BJ (cell line): ENCODE measurements at regions of chr22 and their contacts with region 1.

Region 1: GRCh38 chr22:19730655-19731360 is 7.5 kb downstream of the GP1BB start:
- DNase-seq: peak; percentile 3
- H3K4me3 ChIP-seq: peak overlapping the region; percentile 52
- H3K27me3 ChIP-seq: no peaks in the 10 kb centered on the region
- CTCF ChIP-seq: peak; percentile 96

Region 2: GRCh38 chr22:19495562-19496323 is 235.1 kb before region 1 on chr22:
- CTCF ChIA-PET with region 1: no interaction called
- POLR2A ChIA-PET with region 1: no interaction called
- DNase-seq: no peak
- H3K4me3 ChIP-seq: no peak overlapping the region
- H3K27me3 ChIP-seq: no peaks in the 10 kb centered on the region
- CTCF ChIP-seq: peak; percentile 15; the same call in 1 of the 2 replicates

Region 3: GRCh38 chr22:19745155-19746101 is 14.6 kb after region 1 on chr22:
- CTCF ChIA-PET with region 1: interaction called, 49 read pairs
- POLR2A ChIA-PET with region 1: no interaction called
- DNase-seq: no peak
- H3K4me3 ChIP-seq: no peak overlapping the region
- H3K27me3 ChIP-seq: peaks cover 4% of the 10 kb centered on the region
- CTCF ChIP-seq: no peak

Region 4: DNA sequence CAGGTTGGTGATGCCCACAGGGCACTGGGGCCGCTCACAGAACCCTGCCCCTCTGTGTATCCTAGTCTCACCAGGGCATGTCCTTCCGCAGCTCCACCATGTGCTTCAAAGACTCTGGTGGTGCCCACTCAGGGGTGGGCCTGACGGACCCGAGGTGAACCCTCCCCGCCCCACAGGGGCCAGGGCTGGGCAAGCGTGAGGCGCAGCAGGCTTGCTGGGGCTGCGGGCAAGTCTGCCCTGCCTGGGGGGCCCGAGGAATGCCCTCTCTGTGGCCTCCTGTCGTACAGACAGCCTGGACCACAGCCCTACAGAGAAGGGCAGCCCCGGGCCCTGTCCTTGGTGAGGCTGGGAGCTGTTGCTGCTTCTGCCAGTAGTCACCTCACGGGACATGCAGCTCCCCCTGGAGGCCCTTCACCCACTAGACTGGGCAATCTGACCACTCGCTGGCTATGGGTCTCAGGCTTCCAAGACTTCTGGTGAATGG is 70.0 kb after region 1 on chr22:
- CTCF ChIA-PET with region 1: interaction called, 12 read pairs
- POLR2A ChIA-PET with region 1: no interaction called
- DNase-seq: no peak
- H3K4me3 ChIP-seq: no peak overlapping the region
- H3K27me3 ChIP-seq: no peaks in the 10 kb centered on the region
- CTCF ChIP-seq: peak; percentile 60

Region 5: GRCh38 chr22:19874307-19875060 is 143.7 kb after region 1 on chr22:
- CTCF ChIA-PET with region 1: interaction called, 13 read pairs
- POLR2A ChIA-PET with region 1: no interaction called
- DNase-seq: no peak
- H3K4me3 ChIP-seq: no peak overlapping the region
- H3K27me3 ChIP-seq: no peaks in the 10 kb centered on the region
- CTCF ChIP-seq: no peak

Region 6: GRCh38 chr22:19903031-19903430 is 172.2 kb after region 1 on chr22:
- CTCF ChIA-PET with region 1: interaction called, 76 read pairs
- POLR2A ChIA-PET with region 1: no interaction called
- DNase-seq: no peak
- H3K4me3 ChIP-seq: no peak overlapping the region
- H3K27me3 ChIP-seq: no peaks in the 10 kb centered on the region
- CTCF ChIP-seq: no peak

Region 7: DNA sequence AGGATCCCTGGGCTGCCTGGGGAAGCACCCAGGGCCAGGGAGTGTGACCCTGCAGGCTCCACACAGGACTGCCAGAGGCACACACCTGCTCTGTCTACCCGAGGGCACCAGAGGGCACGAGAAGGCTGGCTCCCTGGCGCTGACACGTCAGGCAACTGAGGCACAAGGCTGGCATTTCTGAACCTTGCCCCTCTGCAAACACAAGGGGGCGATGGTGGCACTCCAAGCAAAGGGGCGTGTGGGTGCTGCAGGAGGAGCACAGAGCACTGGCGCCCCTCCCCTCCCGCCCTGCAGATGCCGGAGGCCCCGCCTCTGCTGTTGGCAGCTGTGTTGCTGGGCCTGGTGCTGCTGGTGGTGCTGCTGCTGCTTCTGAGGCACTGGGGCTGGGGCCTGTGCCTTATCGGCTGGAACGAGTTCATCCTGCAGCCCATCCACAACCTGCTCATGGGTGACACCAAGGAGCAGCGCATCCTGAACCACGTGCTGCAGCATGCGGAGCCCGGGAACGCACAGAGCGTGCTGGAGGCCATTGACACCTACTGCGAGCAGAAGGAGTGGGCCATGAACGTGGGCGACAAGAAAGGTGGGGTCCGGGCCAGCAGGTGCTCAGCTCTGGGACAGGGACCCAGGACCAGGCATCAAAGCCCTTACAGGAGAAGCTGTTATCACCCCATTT is 231.6 kb after region 1 on chr22:
- CTCF ChIA-PET with region 1: interaction called, 5 read pairs
- POLR2A ChIA-PET with region 1: interaction called, 13 read pairs
- DNase-seq: no peak
- H3K4me3 ChIP-seq: no peak overlapping the region
- H3K27me3 ChIP-seq: no peaks in the 10 kb centered on the region
- CTCF ChIP-seq: peak; percentile 78

Region 8: DNA sequence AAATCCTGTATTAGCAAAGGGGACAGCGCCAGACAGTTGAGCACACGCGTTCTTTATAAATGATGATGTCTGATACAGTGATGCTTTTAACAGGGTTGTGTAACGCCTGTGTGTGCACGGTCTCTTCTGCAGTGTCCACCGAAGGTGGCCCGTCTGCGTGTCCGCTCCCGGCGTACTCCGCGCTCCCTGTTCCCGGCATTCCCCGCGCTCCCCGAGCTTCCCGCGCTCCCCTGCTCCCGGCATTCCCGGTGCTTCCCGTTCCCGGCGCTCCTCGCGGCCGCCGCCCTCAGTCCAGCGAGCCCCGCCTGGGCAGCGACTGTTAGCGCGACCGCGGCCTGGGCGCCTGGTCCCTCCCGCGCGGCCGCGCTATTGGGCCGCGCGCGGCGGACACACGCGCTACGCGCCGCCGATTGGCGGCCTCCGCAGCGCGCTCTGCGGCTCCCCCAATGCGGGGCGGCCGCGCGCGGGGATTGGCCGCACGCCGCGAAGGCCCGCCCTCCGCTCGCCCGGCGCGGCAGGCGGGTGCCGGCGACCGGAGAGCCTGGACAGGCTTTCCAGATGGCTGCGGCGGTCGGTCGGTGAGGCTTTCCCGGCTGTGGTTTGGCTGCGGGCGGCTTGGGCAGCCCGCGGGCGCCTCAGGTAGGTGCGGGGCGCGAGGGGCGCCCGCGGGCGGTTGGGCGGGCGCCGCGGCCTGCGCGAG is 349.1 kb after region 1 on chr22 and contains the start of gene DGCR8:
- CTCF ChIA-PET with region 1: no interaction called
- POLR2A ChIA-PET with region 1: no interaction called
- DNase-seq: peak; percentile 71
- H3K4me3 ChIP-seq: peak within 1 kb of the TSS; percentile 58
- H3K27me3 ChIP-seq: no peaks in the 10 kb centered on the region
- CTCF ChIP-seq: no peak
- polyA plus RNA-seq, gene DGCR8: 16.3 and 21.3 TPM in 2 replicates